ENCODE measurements at regions of chr15 and their contacts with region 1.

Region 1: DNA sequence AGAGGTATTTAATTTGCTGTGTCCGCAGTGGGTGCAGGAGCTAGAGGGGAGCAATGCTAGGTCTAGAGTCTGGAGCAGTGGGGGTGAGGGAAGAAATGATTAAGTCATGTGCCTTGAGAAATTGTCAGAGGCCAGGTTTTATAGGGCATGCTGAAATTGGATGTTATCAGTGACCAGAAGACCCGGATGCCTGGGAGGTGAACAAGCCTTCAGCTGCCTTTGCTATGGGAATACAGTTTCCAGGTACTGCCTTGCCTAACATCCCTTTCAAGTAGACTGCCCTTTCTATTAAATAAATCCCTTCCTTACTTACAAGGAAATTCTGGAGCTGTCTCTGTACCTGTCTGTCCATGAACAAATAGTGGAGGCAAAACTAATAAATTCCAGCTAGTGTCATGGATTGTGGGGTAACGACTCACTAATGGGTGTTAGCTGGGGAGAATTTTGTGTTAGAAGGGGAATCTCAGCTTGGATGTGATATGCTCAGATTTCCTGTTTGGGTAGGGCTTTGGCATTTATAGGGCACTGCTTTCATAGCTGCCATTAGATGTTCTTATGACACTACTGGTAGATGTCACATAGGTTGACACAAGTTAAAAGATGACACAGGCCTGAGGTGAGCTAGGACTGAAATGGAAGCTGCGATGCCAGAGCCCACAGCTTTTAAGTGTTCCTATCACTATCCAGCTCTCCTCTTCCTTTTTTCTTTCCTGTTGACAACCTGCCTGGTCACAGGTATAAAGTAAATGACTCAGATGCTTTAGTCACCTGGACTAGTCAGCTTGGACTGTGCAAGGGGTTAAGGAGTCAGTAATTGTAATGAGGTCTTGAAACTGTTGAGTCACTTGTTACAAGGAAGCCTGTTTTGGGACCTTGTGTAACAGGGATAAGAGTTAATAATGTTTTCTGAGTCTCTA is 21.3 kb downstream of the CHD2 start:
- DNase-seq: peak in 2 of 4 donors; percentile 48 to 59
- ATAC-seq: peak; percentile 68
- H3K4me3 ChIP-seq: no peak overlapping the region
- H3K27ac ChIP-seq: peak overlapping the region; percentile 74 to 92 (median 78)
- H3K4me1 ChIP-seq: peaks cover 69% of the 10 kb centered on the region
- H3K27me3 ChIP-seq: no peaks in the 10 kb centered on the region
- CTCF ChIP-seq: no peak
- POLR2A ChIP-seq: peak in 1 of 3 donors; percentile 11

Region 2: GRCh38 chr15:92429378-92430068 is 491.9 kb before region 1 on chr15:
- intact Hi-C with region 1: no loop called
- DNase-seq: no peak
- ATAC-seq: no peak
- H3K4me3 ChIP-seq: no peak overlapping the region
- H3K27ac ChIP-seq: no peak overlapping the region
- H3K4me1 ChIP-seq: no peaks in the 10 kb centered on the region
- H3K27me3 ChIP-seq: no peaks in the 10 kb centered on the region
- CTCF ChIP-seq: no peak
- POLR2A ChIP-seq: no peak

Region 3: DNA sequence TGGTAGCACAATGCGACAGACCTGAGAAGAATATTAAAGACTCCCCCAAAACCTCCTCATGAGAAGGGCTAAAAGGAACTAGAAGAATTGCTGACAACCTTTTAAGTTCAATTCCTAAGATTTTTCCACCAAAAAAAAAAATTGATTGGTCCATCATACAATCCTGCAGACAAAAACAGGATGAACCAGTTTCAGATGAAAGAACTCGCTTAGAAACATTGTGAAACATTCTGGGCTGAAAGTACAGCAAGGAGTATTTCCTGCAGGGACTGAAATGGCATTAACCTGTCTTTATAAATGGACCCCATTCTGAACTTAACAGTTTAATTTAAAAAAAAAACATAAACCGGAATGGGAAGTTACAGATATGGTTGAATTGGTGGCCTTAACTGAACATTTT is 169.9 kb before region 1 on chr15:
- intact Hi-C with region 1: no loop called
- DNase-seq: no peak
- ATAC-seq: peak; percentile 83
- H3K4me3 ChIP-seq: no peak overlapping the region
- H3K27ac ChIP-seq: peak overlapping the region in 2 of 4 donors; percentile 33 to 37
- H3K4me1 ChIP-seq: peaks cover 22% of the 10 kb centered on the region
- H3K27me3 ChIP-seq: no peaks in the 10 kb centered on the region
- CTCF ChIP-seq: no peak
- POLR2A ChIP-seq: no peak

Region 4: GRCh38 chr15:92797168-92797951 is 124.1 kb before region 1 on chr15:
- intact Hi-C with region 1: loop called (anchors 10 kb)
- DNase-seq: peak; percentile 37 to 84 (median 52)
- ATAC-seq: peak; percentile 92
- H3K4me3 ChIP-seq: no peak overlapping the region
- H3K27ac ChIP-seq: peak overlapping the region in 2 of 4 donors; percentile 15 to 44
- H3K4me1 ChIP-seq: peaks cover 4% of the 10 kb centered on the region
- H3K27me3 ChIP-seq: no peaks in the 10 kb centered on the region
- CTCF ChIP-seq: peak; percentile 45 to 90 (median 84)
- POLR2A ChIP-seq: no peak

Region 5: DNA sequence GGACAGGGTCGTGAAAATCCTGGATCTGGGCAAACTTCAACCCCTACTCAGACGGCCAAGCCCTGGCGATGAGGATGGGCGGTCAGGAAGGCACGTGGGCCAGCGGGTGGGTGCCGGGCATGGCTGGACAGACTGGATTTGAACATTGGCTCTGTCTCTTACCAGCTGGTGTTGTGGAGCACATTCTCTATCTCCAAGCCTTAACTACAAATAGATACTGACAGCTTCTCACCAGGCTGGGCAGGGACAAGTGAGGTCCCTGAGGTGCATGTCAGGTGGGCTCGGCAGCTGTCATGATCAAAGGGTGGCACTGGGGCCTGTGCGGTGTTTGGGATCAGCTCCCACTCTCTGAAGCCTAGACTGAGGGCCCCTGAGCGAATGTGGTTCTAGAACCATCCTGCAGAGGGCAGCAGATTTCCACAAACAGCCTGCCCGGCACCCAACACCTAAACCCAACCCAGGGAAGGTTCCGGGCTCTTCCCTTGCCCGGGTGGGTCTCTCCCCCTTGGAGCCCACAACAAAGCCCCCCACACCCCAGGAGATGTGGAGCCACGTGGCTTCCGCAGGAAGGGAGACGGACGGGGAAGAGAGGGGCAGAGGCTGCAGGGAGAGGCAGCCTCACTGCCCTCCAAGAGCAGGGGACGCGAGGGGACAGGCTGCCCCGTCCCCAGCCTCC is 109.1 kb after region 1 on chr15:
- intact Hi-C with region 1: no loop called
- DNase-seq: peak; percentile 74 to 81 (median 80)
- ATAC-seq: peak; percentile 80
- H3K4me3 ChIP-seq: no peak overlapping the region
- H3K27ac ChIP-seq: no peak overlapping the region
- H3K4me1 ChIP-seq: peaks cover 34% of the 10 kb centered on the region
- H3K27me3 ChIP-seq: no peaks in the 10 kb centered on the region
- CTCF ChIP-seq: peak; percentile 73 to 93 (median 87)
- POLR2A ChIP-seq: no peak

Region 6: GRCh38 chr15:93200081-93200836 is 278.8 kb after region 1 on chr15:
- intact Hi-C with region 1: no loop called
- DNase-seq: no peak
- ATAC-seq: no peak
- H3K4me3 ChIP-seq: no peak overlapping the region
- H3K27ac ChIP-seq: no peak overlapping the region
- H3K4me1 ChIP-seq: no peaks in the 10 kb centered on the region
- H3K27me3 ChIP-seq: no peaks in the 10 kb centered on the region
- CTCF ChIP-seq: no peak
- POLR2A ChIP-seq: no peak